ENCODE measurements at regions of chr20 and their contacts with region 1.

Region 1: GRCh38 chr20:16810216-16810615 is 62.1 kb downstream of the OTOR start:
- ATAC-seq: peak in 1 of 8 experiments; percentile 12
- H3K4me3 ChIP-seq: no peak overlapping the region
- H3K27ac ChIP-seq: no peak overlapping the region
- H3K4me1 ChIP-seq: no peaks in the 10 kb centered on the region

Region 2: DNA sequence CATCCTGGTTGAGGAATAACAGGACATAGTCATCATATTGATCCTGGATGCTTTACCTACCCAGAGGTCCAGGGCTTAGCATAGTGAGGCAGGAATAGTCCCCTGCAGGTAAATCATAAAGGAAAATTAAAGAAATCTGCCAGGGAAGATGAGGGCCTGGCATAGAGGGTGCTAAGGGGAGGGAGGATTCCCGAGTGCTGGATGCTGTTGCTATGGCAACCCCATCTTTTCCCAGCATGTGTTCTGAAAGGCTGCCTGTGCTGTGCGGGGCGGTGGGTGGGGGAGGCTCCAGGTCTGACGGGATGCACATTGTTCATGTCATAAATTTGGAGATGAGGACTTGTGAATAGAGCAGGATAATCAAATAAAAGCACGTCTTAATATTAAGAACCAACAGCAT is 204.0 kb after region 1 on chr20:
- in situ Hi-C with region 1: no loop called
- ATAC-seq: peak in 5 of 8 experiments; percentile 76 to 95 (median 79)
- H3K4me3 ChIP-seq: no peak overlapping the region
- H3K27ac ChIP-seq: no peak overlapping the region
- H3K4me1 ChIP-seq: peaks cover 0 to 10% of the 10 kb centered on the region in 2 donors

Region 3: DNA sequence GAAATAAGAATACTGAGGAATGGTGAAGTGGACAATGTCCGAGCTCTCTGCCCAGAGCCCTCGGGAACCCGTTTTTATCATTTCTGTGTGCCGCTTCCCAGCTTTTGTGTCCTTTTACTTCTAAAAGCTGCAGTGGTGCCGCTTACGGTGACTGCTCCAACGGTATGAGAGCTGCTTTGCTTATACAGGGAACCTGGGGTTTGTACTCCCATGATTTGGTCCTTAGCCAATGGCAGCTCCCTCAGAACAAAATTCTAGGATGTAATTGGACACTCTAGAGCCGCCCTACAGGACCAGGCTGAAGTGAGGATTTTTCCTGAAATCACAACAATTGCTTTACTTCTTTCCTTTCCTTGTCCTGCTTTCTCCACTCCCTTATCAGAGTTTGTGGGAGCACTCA is 392.5 kb after region 1 on chr20:
- in situ Hi-C with region 1: no loop called
- ATAC-seq: peak in 4 of 8 experiments; percentile 30 to 78 (median 58)
- H3K4me3 ChIP-seq: no peak overlapping the region
- H3K27ac ChIP-seq: no peak overlapping the region
- H3K4me1 ChIP-seq: peaks cover 0 to 12% of the 10 kb centered on the region in 2 donors

Region 4: GRCh38 chr20:17381724-17382123 is 571.5 kb after region 1 on chr20:
- in situ Hi-C with region 1: no loop called
- ATAC-seq: no peak
- H3K4me3 ChIP-seq: no peak overlapping the region
- H3K27ac ChIP-seq: no peak overlapping the region
- H3K4me1 ChIP-seq: no peaks in the 10 kb centered on the region

Region 5: DNA sequence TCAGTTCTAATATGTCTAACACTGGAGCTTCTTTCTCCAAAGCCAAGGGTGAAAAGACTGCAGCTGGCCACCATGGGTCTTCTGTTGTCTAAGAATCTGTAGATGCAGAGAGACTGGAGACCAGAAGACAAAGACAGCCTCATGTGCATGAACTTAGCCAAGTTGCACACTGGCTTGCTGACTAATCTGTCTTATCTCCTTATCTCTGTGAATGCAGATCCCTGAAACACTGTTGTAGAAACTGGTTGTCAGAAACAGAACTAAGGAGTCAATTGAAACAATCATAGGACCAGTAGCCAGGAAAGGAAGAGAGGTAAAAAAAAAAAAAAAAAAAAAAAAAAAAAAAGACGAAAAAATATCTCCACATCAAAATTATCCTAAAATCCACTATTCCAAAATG is 611.3 kb after region 1 on chr20:
- in situ Hi-C with region 1: loop called in 6 of 9 experiments (anchors 10 to 25 kb)
- ATAC-seq: peak in 2 of 8 experiments; percentile 83 to 88
- H3K4me3 ChIP-seq: no peak overlapping the region
- H3K27ac ChIP-seq: no peak overlapping the region
- H3K4me1 ChIP-seq: peaks cover 0 to 14% of the 10 kb centered on the region in 2 donors